ENCODE measurements at regions of chr11 and their contacts with region 1.

Region 1: DNA sequence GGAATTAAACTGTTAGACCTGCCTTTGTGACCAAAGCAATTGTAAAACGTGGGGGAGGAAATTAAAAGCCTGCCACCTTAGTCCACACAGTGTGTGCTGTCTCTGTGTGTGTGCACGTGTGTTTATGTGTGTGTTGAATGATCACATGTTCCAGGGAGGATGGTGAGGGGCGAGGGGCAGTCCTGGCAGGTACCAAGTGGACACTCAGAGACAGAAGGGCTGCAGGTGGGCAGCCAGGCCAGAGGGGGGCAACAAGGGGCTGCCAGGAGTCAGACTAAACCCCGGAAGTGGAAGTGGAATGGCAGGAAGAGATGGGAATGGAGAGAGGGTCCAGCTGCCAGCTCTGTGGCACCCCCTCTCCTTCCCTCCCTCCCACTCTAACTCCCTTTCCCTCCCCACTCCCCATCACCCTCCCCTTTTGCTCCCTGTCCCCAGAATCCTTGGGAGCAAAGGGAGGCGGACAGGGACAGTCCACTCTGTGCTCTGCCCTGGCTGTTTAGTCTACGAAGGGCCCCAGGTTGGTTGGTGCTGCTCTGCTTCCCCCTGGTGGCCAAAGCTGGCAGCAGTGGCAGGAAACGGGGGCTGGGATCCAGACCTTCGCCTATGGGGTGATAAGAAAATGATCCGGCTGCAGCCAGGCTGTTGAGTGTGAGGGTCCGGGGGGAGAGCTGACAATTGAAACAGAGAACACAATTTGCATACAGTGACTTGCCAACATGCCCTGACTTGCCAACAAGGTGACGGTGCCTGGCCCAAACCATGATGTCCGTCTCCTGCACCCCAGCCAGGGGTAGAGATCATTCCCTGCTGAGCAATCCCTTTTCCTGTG is 24.4 kb downstream of the P2RY2 start:
- DNase-seq: peak; percentile 70
- H3K4me3 Mint-ChIP-seq: no peak overlapping the region
- H3K27ac Mint-ChIP-seq: no peak overlapping the region
- H3K4me1 Mint-ChIP-seq: peaks cover 12% of the 10 kb centered on the region
- H3K27me3 Mint-ChIP-seq: peaks cover 12% of the 10 kb centered on the region
- CTCF ChIP-seq: peak; percentile 98

Region 2: GRCh38 chr11:72962084-72962483 is 280.4 kb before region 1 on chr11:
- CTCF ChIA-PET with region 1: no interaction called
- POLR2A ChIA-PET with region 1: no interaction called
- intact Hi-C with region 1: no loop called
- DNase-seq: peak; percentile 57
- H3K4me3 Mint-ChIP-seq: no peak overlapping the region
- H3K27ac Mint-ChIP-seq: no peak overlapping the region
- H3K4me1 Mint-ChIP-seq: no peaks in the 10 kb centered on the region
- H3K27me3 Mint-ChIP-seq: no peaks in the 10 kb centered on the region
- CTCF ChIP-seq: no peak

Region 3: GRCh38 chr11:73099512-73100266 is 142.8 kb before region 1 on chr11:
- CTCF ChIA-PET with region 1: no interaction called
- POLR2A ChIA-PET with region 1: no interaction called
- intact Hi-C with region 1: no loop called
- DNase-seq: no peak
- H3K4me3 Mint-ChIP-seq: no peak overlapping the region
- H3K27ac Mint-ChIP-seq: no peak overlapping the region
- H3K4me1 Mint-ChIP-seq: no peaks in the 10 kb centered on the region
- H3K27me3 Mint-ChIP-seq: no peaks in the 10 kb centered on the region
- CTCF ChIP-seq: no peak

Region 4: DNA sequence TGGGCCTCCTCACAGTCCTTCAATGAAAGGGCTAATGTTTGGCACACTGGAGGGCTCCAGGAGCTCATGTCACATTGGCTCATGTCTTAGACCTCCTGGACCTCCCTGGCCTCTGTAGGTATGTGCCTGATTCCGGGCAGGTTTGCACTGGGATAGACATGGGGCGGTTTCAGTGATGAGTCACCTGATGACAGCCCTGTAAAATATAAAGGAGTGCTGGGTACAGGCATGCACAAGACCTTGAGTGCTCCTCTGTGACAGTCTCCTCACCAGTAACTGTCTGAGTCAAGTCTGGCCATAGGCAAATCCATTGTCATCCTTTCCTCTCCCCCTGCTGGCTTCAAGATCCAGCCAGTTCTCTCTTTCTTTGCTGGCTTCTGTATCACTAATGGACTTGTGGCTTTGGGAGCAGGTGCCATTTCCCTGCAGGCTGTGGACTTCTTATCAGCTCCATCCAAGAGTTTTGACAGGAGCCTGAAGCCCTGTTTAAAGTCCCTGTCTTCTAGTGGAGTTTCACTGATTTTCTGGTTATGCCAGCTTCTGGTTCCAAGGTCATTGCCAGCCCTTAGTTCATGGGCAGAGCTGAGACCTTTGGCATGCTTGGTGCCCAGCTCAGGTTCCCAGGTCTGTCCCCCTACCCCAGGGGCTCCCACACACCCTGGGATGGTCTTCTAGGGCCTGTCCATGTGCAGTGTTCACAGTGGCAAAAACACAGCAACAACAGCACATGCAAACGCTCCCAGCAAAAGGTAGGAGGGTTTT is 47.1 kb before region 1 on chr11:
- CTCF ChIA-PET with region 1: interaction called, 15 read pairs
- POLR2A ChIA-PET with region 1: interaction called, 3 read pairs
- intact Hi-C with region 1: no loop called
- DNase-seq: peak; percentile 89
- H3K4me3 Mint-ChIP-seq: no peak overlapping the region
- H3K27ac Mint-ChIP-seq: no peak overlapping the region
- H3K4me1 Mint-ChIP-seq: peaks cover 61% of the 10 kb centered on the region
- H3K27me3 Mint-ChIP-seq: no peaks in the 10 kb centered on the region
- CTCF ChIP-seq: no peak

Region 5: GRCh38 chr11:73274752-73275743 is 32.6 kb after region 1 on chr11:
- CTCF ChIA-PET with region 1: no interaction called
- POLR2A ChIA-PET with region 1: no interaction called
- intact Hi-C with region 1: no loop called
- DNase-seq: no peak
- H3K4me3 Mint-ChIP-seq: no peak overlapping the region
- H3K27ac Mint-ChIP-seq: no peak overlapping the region
- H3K4me1 Mint-ChIP-seq: no peaks in the 10 kb centered on the region
- H3K27me3 Mint-ChIP-seq: no peaks in the 10 kb centered on the region
- CTCF ChIP-seq: no peak

Region 6: GRCh38 chr11:73288873-73289707 is 46.6 kb after region 1 on chr11:
- CTCF ChIA-PET with region 1: interaction called, 4 read pairs
- POLR2A ChIA-PET with region 1: no interaction called
- intact Hi-C with region 1: loop called (anchors 1 kb)
- DNase-seq: peak; percentile 72
- H3K4me3 Mint-ChIP-seq: no peak overlapping the region
- H3K27ac Mint-ChIP-seq: no peak overlapping the region
- H3K4me1 Mint-ChIP-seq: peaks cover 6% of the 10 kb centered on the region
- H3K27me3 Mint-ChIP-seq: no peaks in the 10 kb centered on the region
- CTCF ChIP-seq: peak; percentile 97

Measured in MCF 10A (cell line).